Adrenal gland (tissue), 19 donors: ENCODE measurements at regions of chr6 and their contacts with region 1.

Region 1: DNA sequence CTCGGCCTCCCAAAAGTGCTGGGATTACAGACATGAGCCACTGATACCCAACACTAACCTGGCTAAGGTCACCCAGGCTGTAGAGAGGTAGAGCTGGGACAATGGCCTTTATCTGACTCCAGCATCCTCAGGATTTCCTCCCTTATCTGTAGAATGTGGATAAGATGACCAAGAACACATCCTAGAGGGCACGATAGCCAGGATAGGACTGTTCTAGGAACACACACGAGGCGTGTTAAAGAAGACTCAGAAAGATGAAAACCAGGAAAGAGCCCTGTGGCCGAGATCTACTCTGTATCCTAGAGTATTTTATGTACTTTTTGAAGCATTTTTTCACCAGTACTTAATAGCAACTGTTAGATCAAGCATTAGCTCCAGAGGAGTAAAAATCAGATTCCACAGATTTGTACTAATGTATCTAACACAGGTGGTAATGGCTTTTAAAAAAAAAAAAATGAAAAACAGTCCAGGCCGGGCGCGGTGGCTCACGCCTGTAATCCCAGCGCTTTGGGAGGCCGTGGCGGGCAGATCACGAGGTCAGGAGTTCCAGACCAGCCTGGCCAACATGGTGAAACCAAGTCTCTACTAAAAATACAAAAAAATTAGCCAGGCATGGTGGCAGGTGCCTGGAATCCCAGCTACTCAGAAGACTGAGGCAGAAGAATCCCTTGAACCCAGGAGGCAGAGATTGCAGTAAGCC is 17.3 kb downstream of the PPP1R10 start:
- DNase-seq: peak in 1 of 7 donors; percentile 20
- H3K4me3 ChIP-seq: no peak overlapping the region
- H3K27ac ChIP-seq: no peak overlapping the region
- H3K4me1 ChIP-seq: no peaks in the 10 kb centered on the region
- H3K27me3 ChIP-seq: no peaks in the 10 kb centered on the region
- CTCF ChIP-seq: no peak
- POLR2A ChIP-seq: no peak

Region 2: DNA sequence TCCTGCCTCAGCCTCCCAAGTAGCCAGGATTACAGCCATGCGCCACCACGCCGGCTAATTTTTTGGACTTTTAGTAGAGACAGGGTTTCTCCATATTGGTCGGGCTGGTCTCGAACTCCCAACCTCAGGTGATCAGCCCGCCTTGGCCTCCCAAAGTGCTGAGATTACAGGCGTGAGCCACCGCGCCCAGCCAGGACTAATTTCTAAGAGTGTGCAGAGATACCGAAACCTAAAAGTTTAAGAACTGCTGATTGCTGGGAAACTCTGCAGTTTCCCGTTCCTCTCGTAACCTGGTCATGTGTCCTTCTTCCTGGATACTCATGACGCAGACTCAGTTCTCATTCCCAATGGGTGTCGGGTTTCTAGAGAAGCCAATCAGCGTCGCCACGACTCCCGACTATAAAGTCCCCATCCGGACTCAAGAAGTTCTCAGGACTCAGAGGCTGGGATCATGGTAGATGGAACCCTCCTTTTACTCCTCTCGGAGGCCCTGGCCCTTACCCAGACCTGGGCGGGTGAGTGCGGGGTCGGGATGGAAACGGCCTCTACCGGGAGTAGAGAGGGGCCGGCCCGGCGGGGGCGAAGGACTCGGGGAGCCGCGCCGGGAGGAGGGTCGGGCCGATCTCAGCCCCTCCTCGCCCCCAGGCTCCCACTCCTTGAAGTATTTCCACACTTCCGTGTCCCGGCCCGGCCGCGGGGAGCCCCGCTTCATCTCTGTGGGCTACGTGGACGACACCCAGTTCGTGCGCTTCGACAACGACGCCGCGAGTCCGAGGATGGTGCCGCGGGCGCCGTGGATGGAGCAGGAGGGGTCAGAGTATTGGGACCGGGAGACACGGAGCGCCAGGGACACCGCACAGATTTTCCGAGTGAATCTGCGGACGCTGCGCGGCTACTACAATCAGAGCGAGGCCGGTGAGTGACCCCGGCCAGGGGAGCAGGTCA is 110.4 kb before region 1 on chr6 and contains the start of gene HLA-E:
- intact Hi-C with region 1: loop called in 1 of 2 experiments (anchors 5 kb)
- DNase-seq: peak; percentile 92 to 99 (median 98)
- H3K4me3 ChIP-seq: peak within 1 kb of the TSS; percentile 23 to 93 (median 80)
- H3K27ac ChIP-seq: peak within 1 kb of the TSS; percentile 89 to 99 (median 98)
- H3K4me1 ChIP-seq: peaks cover 0 to 8% of the 10 kb centered on the region in 2 donors
- H3K27me3 ChIP-seq: no peaks in the 10 kb centered on the region
- CTCF ChIP-seq: peak in 1 of 6 experiments; percentile 4
- POLR2A ChIP-seq: peak; percentile 98 to 99
- total RNA-seq, gene HLA-E: 85.7 to 667 (median 326) TPM

Region 3: DNA sequence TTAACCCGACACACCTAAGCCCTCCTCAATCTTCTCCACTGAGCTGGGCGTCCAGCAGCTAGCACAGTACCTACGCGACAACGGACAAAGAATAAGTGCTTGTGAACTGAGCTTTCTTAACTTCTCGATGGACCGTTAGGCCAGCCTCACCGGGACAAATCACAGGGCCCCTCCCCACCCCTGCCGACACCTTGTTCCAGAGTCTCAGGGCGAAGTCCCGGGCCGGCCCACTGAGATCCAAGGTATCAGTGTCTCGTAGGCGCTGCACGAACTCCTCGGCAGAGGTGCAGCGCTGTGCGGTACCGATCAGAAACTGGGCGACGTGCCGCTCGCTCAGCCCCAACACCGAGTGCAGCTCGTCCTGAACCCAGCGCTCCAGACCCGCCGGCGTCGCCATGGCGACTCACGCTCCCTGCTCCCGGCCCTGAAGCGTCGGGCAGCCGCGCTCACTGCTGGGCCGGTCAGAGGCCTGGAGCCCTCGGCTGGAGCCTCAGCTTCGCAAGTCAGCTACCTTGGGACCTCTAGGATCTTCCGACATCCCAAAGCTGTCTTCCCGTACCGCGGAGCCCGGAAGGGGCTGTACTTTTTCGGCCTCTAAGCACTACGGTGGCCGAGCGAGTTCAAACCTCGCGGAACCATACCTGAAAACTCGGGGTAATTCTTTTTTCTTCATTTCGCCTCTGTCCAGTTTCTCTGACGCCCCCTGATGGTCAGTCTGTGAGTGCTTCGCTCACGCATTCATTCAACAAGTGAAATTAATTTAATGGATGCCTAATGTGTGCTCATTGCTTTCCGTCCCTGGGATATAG is 72.9 kb after region 1 on chr6 and contains the start of gene DHX16:
- intact Hi-C with region 1: no loop called
- DNase-seq: peak; percentile 96 to 99 (median 97)
- H3K4me3 ChIP-seq: peak within 1 kb of the TSS; percentile 78 to 99 (median 90)
- H3K27ac ChIP-seq: peak within 1 kb of the TSS; percentile 37 to 88 (median 45)
- H3K4me1 ChIP-seq: peaks cover 10 to 22% of the 10 kb centered on the region in 2 donors
- H3K27me3 ChIP-seq: no peaks in the 10 kb centered on the region
- CTCF ChIP-seq: peak; percentile 76 to 93 (median 88)
- POLR2A ChIP-seq: peak in 1 of 2 donors; percentile 62
- total RNA-seq, gene DHX16: 16.4 to 39.7 (median 28.0) TPM